ENCODE measurements at regions of chr1 and their contacts with region 1.

Region 1: GRCh38 chr1:231421993-231422764 is at the start of gene EGLN1:
- DNase-seq: peak; percentile 88 to 92
- ATAC-seq: peak; percentile 71 to 89 (median 86)
- H3K4me3 ChIP-seq: peak within 1 kb of the TSS; percentile 91
- H3K27ac ChIP-seq: peak within 1 kb of the TSS; percentile 99
- H3K4me1 ChIP-seq: peaks cover 31% of the 10 kb centered on the region
- H3K27me3 ChIP-seq: no peaks in the 10 kb centered on the region
- CTCF ChIP-seq: no peak
- total RNA-seq, gene EGLN1: 158 to 532 (median 327) TPM

Region 2: DNA sequence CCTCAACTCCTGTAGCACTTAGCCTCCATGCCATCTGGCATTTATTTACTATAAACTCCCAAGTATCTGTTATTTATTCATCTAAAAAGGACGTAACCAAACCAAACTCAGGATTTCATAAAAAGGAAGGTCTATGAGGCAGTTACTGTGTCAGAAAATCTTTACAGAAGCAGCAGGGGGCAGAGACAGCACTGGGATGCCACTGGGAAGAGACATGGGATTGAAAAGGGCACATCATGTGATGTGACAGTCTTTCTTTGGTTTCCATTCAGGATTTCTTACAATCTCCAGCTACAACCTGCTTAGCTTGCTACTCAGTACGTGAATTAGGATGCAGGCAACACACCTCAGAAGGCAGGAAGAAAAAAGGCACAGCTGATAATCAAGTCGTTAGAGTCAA is 52.9 kb before region 1 on chr1:
- intact Hi-C with region 1: loop called (anchors 5 kb)
- DNase-seq: no peak
- ATAC-seq: peak in 3 of 4 donors; percentile 22 to 57 (median 25)
- H3K4me3 ChIP-seq: no peak overlapping the region
- H3K27ac ChIP-seq: peak overlapping the region; percentile 20
- H3K4me1 ChIP-seq: peaks cover 3% of the 10 kb centered on the region
- H3K27me3 ChIP-seq: no peaks in the 10 kb centered on the region
- CTCF ChIP-seq: peak; percentile 7

Region 3: GRCh38 chr1:231383159-231383860 is 38.9 kb before region 1 on chr1:
- intact Hi-C with region 1: loop called (anchors 5 kb)
- DNase-seq: peak in 1 of 2 donors; percentile 59
- ATAC-seq: peak; percentile 84 to 93 (median 88)
- H3K4me3 ChIP-seq: peak overlapping the region; percentile 42
- H3K27ac ChIP-seq: peak overlapping the region; percentile 74
- H3K4me1 ChIP-seq: peaks cover 76% of the 10 kb centered on the region
- H3K27me3 ChIP-seq: no peaks in the 10 kb centered on the region
- CTCF ChIP-seq: no peak

Region 4: DNA sequence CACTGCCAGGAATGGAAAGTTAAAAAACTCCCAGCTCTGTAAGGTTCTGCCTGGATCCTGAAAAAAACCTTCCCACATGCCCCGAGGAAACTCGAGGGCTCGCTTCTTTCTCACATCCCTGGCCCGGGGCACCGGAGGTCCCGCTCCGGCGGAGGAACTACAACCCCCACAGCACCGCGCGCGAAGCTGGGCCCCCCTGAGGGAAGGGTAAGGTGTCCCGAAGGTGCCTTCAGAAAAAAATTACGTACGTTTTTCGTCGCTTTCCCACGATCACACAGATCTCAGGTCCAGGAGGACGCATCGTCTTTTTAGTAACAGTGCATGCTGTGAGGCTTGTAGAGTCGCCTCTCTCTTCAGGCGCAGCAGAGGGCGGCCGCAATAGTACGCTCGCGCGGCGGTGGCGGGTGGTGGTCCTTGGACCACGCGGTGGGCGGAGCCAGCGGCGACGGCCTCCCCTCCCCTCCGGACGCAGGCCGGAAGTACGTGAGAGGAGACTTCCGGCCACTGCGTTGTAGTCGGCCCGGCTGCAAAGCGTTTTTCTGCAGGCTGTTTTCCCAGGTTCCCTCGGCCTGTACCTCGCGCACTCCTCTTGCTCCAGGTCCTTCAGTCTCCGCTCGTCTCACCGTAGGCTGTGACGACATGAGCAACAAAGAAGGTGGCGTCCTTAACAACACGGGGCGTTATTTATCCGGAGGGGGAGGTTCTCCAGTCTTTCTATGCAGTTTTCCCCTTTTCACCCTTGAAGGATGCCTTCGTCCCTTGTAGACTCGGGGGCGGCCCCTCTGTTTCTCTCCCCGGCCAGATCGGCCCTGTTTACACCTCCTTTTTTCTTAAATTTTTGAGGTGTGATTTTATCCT is 106.2 kb after region 1 on chr1 and contains the start of gene TSNAX:
- intact Hi-C with region 1: loop called (anchors 2 kb)
- DNase-seq: peak; percentile 92 to 96
- ATAC-seq: peak; percentile 97 to 99 (median 98)
- H3K4me3 ChIP-seq: peak within 1 kb of the TSS; percentile 77
- H3K27ac ChIP-seq: peak within 1 kb of the TSS; percentile 93
- H3K4me1 ChIP-seq: peaks cover 38% of the 10 kb centered on the region
- H3K27me3 ChIP-seq: no peaks in the 10 kb centered on the region
- CTCF ChIP-seq: no peak
- total RNA-seq, gene TSNAX: 31.5 to 108 (median 54.7) TPM

Region 5: DNA sequence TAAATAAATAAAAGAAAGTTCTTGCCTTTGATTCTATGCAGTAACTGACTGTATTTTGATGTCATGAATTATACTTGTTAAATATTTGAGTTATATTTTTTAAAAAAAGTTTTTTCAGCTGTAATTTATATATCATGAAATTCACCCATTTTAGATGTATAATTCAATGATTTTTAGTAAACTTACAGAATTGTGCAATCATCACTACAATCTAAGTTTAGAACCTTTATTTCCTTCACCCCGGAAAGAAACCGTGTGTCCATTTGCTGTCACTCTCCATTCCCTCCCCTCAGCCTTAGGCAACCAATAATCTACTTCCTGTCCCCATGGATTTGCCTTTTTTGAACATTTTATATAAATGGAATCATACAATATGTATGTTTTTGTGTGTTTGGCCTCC is 171.9 kb after region 1 on chr1:
- intact Hi-C with region 1: no loop called
- DNase-seq: no peak
- ATAC-seq: no peak
- H3K4me3 ChIP-seq: no peak overlapping the region
- H3K27ac ChIP-seq: no peak overlapping the region
- H3K4me1 ChIP-seq: no peaks in the 10 kb centered on the region
- H3K27me3 ChIP-seq: no peaks in the 10 kb centered on the region
- CTCF ChIP-seq: no peak

Measured in psoas muscle (tissue), 8 donors.